Aorta (tissue), 5 donors: ENCODE measurements at regions of chr2 and their contacts with region 1.

Region 1: GRCh38 chr2:137348296-137348695 is 583.0 kb downstream of the THSD7B start:
- DNase-seq: no peak
- ATAC-seq: no peak
- H3K4me3 ChIP-seq: no peak overlapping the region
- H3K27ac ChIP-seq: no peak overlapping the region
- H3K4me1 ChIP-seq: no peaks in the 10 kb centered on the region
- H3K27me3 ChIP-seq: no peaks in the 10 kb centered on the region

Region 2: GRCh38 chr2:137333386-137334165 is 14.7 kb before region 1 on chr2:
- intact Hi-C with region 1: loop called in 1 of 2 experiments (anchors 1 kb)
- DNase-seq: no peak
- ATAC-seq: peak; percentile 22
- H3K4me3 ChIP-seq: no peak overlapping the region
- H3K27ac ChIP-seq: no peak overlapping the region
- H3K4me1 ChIP-seq: peaks cover 0 to 2% of the 10 kb centered on the region in 2 donors
- H3K27me3 ChIP-seq: no peaks in the 10 kb centered on the region